Heart left ventricle (tissue), 16 donors: ENCODE measurements at regions of chr17 and their contacts with region 1.

Region 1: GRCh38 chr17:2282297-2282873 is 21.2 kb downstream of the SMG6 start:
- DNase-seq: no peak
- ATAC-seq: peak in 3 of 4 donors; percentile 48 to 80 (median 65)
- H3K4me3 ChIP-seq: no peak overlapping the region
- H3K27ac ChIP-seq: no peak overlapping the region
- H3K4me1 ChIP-seq: peaks cover 0 to 16% (median 0%) of the 10 kb centered on the region in 12 donors
- H3K27me3 ChIP-seq: no peaks in the 10 kb centered on the region
- CTCF ChIP-seq: peak; percentile 42 to 72 (median 62)
- POLR2A ChIP-seq: no peak

Region 2: GRCh38 chr17:1899403-1900000 is 382.9 kb before region 1 on chr17:
- intact Hi-C with region 1: loop called in 5 of 10 experiments (anchors 10 kb)
- DNase-seq: no peak
- ATAC-seq: no peak
- H3K4me3 ChIP-seq: no peak overlapping the region
- H3K27ac ChIP-seq: no peak overlapping the region
- H3K4me1 ChIP-seq: peaks cover 0 to 5% (median 0%) of the 10 kb centered on the region in 12 donors
- H3K27me3 ChIP-seq: no peaks in the 10 kb centered on the region
- CTCF ChIP-seq: peak in 1 of 12 donors; percentile 11
- POLR2A ChIP-seq: no peak

Region 3: DNA sequence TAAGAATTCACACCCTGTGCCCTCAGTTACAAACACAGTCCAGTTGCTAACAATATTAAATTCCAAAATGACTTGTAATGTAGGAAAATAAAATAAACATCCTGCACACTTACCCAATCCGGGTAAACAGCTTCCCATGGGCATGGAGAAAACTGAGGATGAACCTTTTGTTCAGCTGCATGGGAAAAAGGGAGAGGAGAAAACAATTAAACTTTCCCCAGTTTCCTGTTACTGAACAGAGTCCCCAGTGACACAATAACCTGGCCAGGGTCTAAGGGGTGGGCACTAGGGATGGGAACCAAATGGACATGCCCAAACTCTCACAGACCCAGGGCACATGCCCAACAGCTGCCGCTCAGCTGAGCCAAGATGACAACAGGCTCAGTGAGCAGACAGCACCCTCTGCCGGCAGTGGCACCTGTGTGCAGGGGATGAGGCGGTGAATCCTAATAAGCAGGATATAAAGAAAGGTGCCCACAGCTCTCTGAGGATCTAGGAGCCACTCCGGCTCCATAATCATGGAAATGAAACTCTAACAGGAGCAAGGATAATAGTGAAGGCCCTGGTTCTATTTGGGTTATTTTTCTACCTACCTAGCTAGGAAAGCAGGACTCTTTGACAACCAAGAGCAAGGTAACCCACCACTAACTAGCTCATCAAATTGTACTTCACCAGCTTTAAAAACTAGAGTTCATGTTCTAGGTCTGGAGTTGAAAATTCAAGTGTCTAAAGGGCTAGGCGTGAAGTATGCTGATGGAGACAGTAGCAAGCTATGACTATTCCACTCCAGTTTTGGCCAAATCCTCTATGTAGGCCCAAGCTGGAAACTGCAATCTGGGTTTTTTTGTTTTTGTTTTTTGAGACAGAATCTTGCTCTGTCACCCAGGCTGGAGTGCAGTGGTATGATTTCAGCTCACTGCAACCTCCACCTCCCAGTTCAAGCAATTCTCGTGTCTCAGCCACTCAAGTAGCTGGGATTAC is 37.5 kb before region 1 on chr17:
- intact Hi-C with region 1: loop called in 1 of 10 experiments (anchors 5 kb)
- DNase-seq: peak; percentile 84 to 94 (median 87)
- ATAC-seq: peak; percentile 79 to 92 (median 88)
- H3K4me3 ChIP-seq: no peak overlapping the region
- H3K27ac ChIP-seq: peak overlapping the region in 11 of 12 donors; percentile 22 to 75 (median 56)
- H3K4me1 ChIP-seq: peaks cover 0 to 26% (median 13%) of the 10 kb centered on the region in 12 donors
- H3K27me3 ChIP-seq: no peaks in the 10 kb centered on the region
- CTCF ChIP-seq: peak in 11 of 12 donors; percentile 95 to 100 (median 97)
- POLR2A ChIP-seq: no peak